ENCODE measurements at regions of chr7 and their contacts with region 1.

Region 1: DNA sequence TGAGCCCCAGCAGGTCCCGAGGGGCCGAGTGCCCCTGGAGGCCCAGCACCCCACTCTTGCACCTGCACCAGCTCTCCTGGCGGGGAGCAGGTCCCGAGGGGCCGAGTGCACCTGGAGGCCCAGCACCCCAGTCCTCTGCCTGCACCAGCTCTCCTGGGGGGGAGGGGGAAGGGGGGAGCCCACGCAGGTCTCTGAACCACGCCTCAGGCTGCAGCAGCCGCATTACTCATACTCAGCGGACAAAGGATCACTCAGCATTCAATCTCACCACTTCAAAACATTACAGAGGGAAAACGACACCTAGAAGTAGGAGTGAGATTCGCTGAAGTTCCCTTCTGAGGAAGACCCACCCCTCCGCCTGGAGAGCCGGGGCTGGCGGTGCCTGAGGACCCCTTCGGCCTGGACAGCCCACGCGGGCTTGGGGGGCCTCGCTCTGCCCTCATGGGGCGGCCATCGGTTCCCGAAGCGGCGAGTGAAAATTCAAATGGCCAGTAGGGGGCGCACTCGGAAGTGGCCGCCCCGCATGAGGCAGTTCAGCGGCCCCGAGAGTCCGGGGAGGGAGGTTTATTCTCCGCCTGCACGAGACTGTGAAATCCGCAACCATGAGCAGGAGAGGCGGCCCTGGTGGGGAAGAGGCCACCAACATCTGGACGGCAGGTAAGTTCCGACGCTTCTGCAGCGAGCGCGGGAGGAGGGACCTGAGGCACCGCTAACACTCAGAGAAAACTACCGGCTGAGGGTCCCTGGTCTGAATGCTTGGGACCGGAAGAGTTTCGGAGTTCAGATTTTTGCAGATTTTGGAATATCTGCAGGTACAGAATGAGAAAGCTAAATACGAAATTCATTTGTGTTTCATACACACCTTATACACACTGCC is 1.1 kb upstream of the GPER1 start:
- DNase-seq: peak; percentile 87
- H3K4me3 ChIP-seq: peak overlapping the region; percentile 24 to 52 (median 46)
- H3K27ac ChIP-seq: peak overlapping the region; percentile 76 to 85 (median 80)
- H3K4me1 ChIP-seq: peaks cover 0 to 41% (median 35%) of the 10 kb centered on the region in 4 donors
- H3K27me3 ChIP-seq: no peaks in the 10 kb centered on the region
- CTCF ChIP-seq: peak; percentile 79 to 94 (median 81)
- EP300 ChIP-seq: no peak
- POLR2A ChIP-seq: no peak

Region 2: GRCh38 chr7:1073142-1073977 is 13.5 kb before region 1 on chr7:
- intact Hi-C with region 1: no loop called
- DNase-seq: no peak
- H3K4me3 ChIP-seq: peak overlapping the region in 3 of 4 donors; percentile 11 to 36 (median 23)
- H3K27ac ChIP-seq: peak overlapping the region in 2 of 4 donors; percentile 2 to 7
- H3K4me1 ChIP-seq: peaks cover 0 to 8% (median 0%) of the 10 kb centered on the region in 4 donors
- H3K27me3 ChIP-seq: no peaks in the 10 kb centered on the region
- CTCF ChIP-seq: no peak
- EP300 ChIP-seq: no peak
- POLR2A ChIP-seq: no peak

Region 3: DNA sequence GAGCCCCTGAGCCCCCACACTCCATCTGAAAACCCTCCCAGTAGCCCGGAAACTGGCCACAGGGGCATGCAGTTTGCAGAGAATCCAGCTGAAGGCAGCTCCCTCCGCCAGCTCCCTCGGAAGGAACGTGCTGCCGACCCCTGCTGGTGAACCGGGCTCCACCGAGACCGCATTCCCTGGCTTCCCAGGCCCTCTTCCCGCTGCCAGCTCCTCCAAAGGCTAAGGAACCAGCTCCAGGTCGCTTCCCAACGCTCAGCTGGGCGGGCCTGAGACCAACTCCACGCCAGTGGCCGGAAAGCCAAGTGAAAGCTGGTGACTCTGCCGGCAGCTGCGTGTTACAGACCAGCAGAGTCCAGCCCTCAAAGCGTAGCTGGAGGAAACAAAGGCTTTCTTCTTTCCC is 36.9 kb after region 1 on chr7:
- intact Hi-C with region 1: loop called (anchors 1 kb)
- DNase-seq: peak; percentile 94
- H3K4me3 ChIP-seq: peak overlapping the region in 3 of 4 donors; percentile 12 to 32 (median 27)
- H3K27ac ChIP-seq: peak overlapping the region; percentile 74 to 87 (median 80)
- H3K4me1 ChIP-seq: peaks cover 0 to 25% (median 23%) of the 10 kb centered on the region in 4 donors
- H3K27me3 ChIP-seq: no peaks in the 10 kb centered on the region
- CTCF ChIP-seq: peak; percentile 62 to 81 (median 70)
- EP300 ChIP-seq: no peak
- POLR2A ChIP-seq: no peak

Region 4: DNA sequence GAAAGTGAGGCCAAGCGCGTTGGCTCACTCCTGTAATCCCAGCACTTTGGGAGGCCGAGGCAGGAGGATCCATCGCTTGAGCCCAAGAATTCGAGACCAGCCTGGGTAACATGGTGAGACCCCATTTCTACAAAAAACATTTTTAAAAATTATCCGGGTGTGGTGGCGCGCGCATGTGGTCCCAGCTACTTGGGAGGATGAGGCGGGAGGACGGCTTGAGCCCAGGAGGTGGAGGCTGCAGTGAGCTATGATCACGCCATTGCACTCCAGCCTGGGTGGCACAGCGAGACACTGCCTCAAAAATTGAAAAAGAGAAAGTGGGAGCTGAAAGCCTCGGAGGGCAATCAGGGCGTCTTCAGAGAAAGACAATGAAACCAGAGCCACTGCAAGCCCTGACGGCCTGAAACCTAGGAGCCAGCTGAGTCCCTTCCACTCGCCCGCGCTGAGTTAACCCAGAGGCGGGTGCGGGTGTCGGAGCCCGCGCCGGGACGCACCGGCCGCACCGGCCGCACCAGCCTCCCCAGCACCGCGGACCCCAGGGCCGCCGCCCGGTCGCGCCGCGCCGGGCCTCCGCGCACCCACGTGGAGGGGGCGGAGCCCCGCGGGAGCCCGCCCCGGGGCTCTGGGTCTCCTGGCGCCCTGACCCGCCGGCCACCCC is 50.8 kb after region 1 on chr7:
- intact Hi-C with region 1: loop called (anchors 5 kb)
- DNase-seq: peak; percentile 68
- H3K4me3 ChIP-seq: peak overlapping the region; percentile 57 to 86 (median 68)
- H3K27ac ChIP-seq: peak overlapping the region; percentile 74 to 90 (median 81)
- H3K4me1 ChIP-seq: peaks cover 0 to 19% (median 16%) of the 10 kb centered on the region in 4 donors
- H3K27me3 ChIP-seq: no peaks in the 10 kb centered on the region
- CTCF ChIP-seq: no peak
- EP300 ChIP-seq: no peak
- POLR2A ChIP-seq: no peak

Region 5: GRCh38 chr7:1159891-1160668 is 73.3 kb after region 1 on chr7 and contains the start of gene ZFAND2A:
- intact Hi-C with region 1: loop called (anchors 5 kb)
- DNase-seq: peak; percentile 99
- H3K4me3 ChIP-seq: peak within 1 kb of the TSS; percentile 78 to 100 (median 94)
- H3K27ac ChIP-seq: peak within 1 kb of the TSS; percentile 87 to 96 (median 92)
- H3K4me1 ChIP-seq: peaks cover 0 to 28% (median 23%) of the 10 kb centered on the region in 4 donors
- H3K27me3 ChIP-seq: no peaks in the 10 kb centered on the region
- CTCF ChIP-seq: no peak
- EP300 ChIP-seq: peak in 1 of 4 donors; percentile 81
- POLR2A ChIP-seq: peak; percentile 60 to 66
- total RNA-seq, gene ZFAND2A: 21.6 to 28.2 (median 25.0) TPM

Region 6: GRCh38 chr7:1175967-1176851 is 89.4 kb after region 1 on chr7:
- intact Hi-C with region 1: loop called (anchors 5 kb)
- DNase-seq: peak; percentile 88
- H3K4me3 ChIP-seq: peak overlapping the region in 3 of 4 donors; percentile 21 to 36 (median 28)
- H3K27ac ChIP-seq: peak overlapping the region in 3 of 4 donors; percentile 26 to 43 (median 42)
- H3K4me1 ChIP-seq: peaks cover 0 to 12% (median 7%) of the 10 kb centered on the region in 4 donors
- H3K27me3 ChIP-seq: peaks cover 0 to 6% (median 3%) of the 10 kb centered on the region in 3 donors
- CTCF ChIP-seq: peak; percentile 80 to 96 (median 86)
- EP300 ChIP-seq: no peak
- POLR2A ChIP-seq: no peak